ENCODE measurements at regions of chr6 and their contacts with region 1.

Region 1: DNA sequence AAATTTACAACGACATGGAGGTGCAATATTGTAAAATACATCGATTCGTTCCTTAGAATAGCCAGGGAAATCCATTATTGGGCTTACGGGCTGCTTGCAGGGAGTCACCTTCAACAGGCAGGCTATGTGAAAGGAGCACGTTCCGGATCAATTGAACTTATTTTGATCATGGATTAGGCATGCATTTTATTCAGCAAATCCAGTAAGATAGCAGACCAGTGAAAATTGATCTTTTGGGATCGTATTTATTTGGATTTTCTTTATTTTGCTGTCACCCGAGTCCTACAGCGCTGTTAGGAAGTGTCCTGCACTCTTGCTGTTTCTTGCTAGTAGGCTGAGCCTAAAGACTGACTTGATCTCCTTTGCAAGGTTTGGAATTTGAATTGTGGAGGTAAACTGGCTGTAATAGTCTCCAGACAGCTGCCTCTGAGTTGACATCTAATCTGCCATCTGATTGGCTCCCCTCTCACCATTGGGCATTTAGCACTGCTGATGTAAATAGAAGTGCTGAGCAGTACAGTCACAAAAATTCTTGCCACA is 3.0 kb downstream of the ARID1B start:
- DNase-seq: peak; percentile 92
- H3K4me3 ChIP-seq: peak overlapping the region; percentile 79
- H3K27ac ChIP-seq: peak overlapping the region; percentile 85
- H3K4me1 ChIP-seq: peaks cover 46% of the 10 kb centered on the region
- H3K27me3 ChIP-seq: no peaks in the 10 kb centered on the region

Region 2: DNA sequence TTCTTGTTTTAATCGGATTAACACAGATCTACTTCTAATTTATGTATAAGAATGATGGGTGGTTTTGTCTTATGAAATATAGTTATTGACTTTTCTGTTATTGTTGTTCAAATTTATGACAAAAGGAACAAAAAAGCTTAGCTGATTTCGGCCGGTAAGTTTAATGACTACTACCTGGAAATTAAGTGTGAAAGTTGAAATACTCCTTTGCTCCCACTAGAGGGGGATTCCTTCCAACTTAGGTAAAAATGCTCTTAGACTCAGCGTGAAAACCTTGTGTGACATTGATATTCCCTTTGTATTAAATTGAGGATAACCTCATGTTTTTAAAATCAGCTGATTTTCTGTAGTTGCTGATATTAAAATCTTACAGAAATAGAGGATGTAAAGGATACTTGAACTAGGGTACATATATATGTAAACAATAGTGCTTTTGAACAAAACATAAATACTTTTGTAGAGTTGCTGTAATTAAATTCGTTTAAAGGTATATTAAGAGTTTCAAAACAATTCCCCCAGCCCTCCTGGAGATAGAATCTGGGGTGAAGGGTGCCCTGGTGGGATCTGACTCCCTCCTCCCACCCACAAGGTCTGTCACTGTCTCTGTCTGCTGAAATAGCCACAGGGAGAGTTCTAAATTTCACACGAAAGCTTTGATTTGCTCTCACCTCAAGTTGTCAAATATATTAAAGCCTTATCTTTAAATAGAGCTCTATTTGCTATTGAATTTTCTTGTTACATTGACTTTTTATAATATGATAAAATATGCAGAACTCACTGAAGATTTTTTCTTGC is 254.5 kb after region 1 on chr6:
- in situ Hi-C with region 1: loop called (anchors 10 kb)
- DNase-seq: peak; percentile 81
- H3K4me3 ChIP-seq: peak overlapping the region; percentile 81
- H3K27ac ChIP-seq: peak overlapping the region; percentile 63
- H3K4me1 ChIP-seq: peaks cover 41% of the 10 kb centered on the region
- H3K27me3 ChIP-seq: no peaks in the 10 kb centered on the region